Ovary (tissue), 10 donors: ENCODE measurements at regions of chr10 and their contacts with region 1.

Region 1: GRCh38 chr10:29392376-29393021 is 103.6 kb downstream of the LYZL1 start:
- DNase-seq: peak in 3 of 5 donors; percentile 42 to 55 (median 49)
- H3K4me3 ChIP-seq: no peak overlapping the region
- H3K27ac ChIP-seq: no peak overlapping the region
- H3K4me1 ChIP-seq: no peaks in the 10 kb centered on the region
- H3K27me3 ChIP-seq: no peaks in the 10 kb centered on the region
- CTCF ChIP-seq: peak in 2 of 3 donors; percentile 58 to 61
- EP300 ChIP-seq: no peak
- POLR2A ChIP-seq: no peak

Region 2: DNA sequence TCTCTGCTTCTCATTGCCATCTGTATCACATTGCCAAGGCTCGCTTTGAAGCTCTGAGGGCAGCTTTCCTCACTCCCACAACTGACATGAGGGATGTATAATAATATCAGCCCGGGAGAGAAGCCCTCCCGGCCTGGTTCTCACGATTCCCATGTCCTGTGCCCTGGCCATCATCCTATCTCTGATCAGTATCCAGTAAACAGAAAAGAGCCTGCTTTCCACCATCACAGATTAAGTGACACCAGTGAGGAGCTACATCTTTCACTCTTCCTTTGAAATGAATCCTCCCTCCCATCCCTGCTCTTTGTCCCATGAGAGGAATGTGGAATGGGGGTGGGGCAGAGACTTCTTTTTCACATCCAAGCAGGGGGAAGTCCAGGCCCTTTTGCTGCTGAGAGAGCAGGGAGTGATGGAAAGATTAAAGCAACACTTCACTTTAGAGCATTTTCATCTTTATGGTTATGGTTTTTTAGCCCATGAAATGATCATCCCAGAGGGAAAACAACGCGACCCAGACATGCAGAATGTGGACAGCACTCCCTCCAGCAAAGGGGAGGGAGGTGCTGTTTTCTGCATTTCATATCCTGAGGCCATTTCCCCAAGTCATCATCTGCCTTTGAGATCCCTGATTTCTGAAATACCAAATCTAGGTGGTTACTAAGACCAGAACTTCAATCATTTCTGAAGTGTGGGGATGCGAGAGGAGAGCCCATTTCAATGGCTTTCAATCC is 188.3 kb before region 1 on chr10:
- intact Hi-C with region 1: no loop called
- DNase-seq: no peak
- H3K4me3 ChIP-seq: no peak overlapping the region
- H3K27ac ChIP-seq: no peak overlapping the region
- H3K4me1 ChIP-seq: peaks cover 5% of the 10 kb centered on the region
- H3K27me3 ChIP-seq: no peaks in the 10 kb centered on the region
- CTCF ChIP-seq: no peak
- EP300 ChIP-seq: no peak
- POLR2A ChIP-seq: no peak

Region 3: DNA sequence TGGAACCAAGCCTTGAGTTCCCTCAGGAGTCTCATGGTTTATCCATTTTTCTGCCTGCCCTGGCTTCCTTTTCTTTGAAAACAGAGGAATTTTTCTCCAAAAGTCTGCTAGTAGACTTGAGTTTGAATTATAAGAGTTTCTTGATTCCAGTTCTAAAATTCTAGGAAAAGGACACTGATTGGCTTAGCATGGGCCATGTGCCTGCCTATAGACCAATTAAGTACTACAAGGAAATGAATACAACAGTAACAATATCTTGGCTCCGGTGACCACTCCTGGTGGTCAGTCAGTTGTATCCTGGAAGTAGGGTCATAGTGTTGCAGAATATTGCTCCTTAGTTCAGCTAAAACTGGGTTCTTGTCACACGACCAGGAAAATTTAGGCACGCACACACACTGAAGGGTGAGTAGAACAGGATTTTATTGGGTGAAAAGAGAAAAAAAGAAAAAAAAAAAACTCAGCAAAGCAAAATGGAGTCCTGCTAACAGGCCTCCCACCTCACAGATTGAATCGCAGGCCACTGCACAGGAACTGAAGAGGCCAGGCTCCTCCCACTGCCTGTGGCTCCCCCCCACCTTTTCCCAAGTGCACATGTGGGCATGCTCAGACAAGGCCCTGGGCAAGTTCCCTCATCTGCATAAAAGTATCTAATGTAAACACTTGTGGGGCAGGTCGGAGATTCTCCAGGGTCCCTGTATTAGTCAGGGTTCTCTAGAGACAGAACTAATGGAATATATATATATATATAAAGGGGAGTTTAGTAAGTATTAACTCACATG is 51.4 kb after region 1 on chr10:
- intact Hi-C with region 1: loop called (anchors 5 to 10 kb)
- DNase-seq: no peak
- H3K4me3 ChIP-seq: no peak overlapping the region
- H3K27ac ChIP-seq: no peak overlapping the region
- H3K4me1 ChIP-seq: no peaks in the 10 kb centered on the region
- H3K27me3 ChIP-seq: no peaks in the 10 kb centered on the region
- CTCF ChIP-seq: no peak
- EP300 ChIP-seq: no peak
- POLR2A ChIP-seq: no peak

Region 4: DNA sequence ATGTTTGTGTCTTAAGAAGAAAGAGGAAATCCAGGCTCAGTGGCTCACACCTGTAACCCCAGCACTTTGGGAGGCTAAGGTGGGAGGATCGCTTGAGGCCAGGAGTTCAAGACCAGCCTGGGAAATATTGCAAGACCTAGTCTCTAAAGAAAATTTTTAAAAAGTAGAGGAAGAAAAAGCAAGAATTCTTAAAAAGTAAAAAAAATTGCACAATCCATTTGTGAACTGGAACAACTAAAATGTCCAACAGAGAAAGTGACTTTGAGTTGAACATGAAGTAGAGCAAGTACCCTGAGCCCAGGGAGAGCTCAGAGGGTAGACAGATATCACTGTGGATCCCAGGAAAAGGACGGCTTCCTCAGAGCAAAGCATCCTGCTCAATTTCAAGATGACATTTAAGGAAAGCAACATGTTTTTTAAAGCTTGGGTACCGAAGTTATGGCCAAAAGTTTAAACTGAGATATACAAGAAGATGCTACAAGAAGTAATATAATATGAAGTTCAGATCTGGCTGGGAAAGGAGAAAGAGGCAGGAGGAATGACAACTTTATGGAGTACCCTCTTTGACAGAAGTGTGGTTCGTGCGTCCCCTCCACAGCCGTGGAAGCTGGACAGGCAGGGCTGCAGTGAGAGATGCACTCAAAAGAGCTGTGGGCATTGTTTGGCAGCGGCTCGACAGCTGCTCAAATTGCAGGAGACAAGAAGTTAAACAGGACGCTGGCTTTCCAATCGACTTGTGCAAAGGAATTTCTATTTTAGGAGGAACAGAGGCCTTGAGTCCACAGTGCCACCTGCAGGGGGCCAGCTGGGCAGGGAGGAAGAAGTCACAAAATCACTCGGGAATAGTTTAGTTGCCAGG is 465.6 kb after region 1 on chr10:
- intact Hi-C with region 1: no loop called
- DNase-seq: peak; percentile 65 to 77 (median 69)
- H3K4me3 ChIP-seq: no peak overlapping the region
- H3K27ac ChIP-seq: no peak overlapping the region
- H3K4me1 ChIP-seq: no peaks in the 10 kb centered on the region
- H3K27me3 ChIP-seq: no peaks in the 10 kb centered on the region
- CTCF ChIP-seq: peak in 2 of 3 donors; percentile 57 to 61
- EP300 ChIP-seq: no peak
- POLR2A ChIP-seq: no peak